ENCODE measurements at regions of chr2 and their contacts with region 1.

Region 1: GRCh38 chr2:74178201-74179062 is at the start of gene MOB1A:
- DNase-seq: peak; percentile 99
- ATAC-seq: peak; percentile 86
- H3K4me3 ChIP-seq: peak within 1 kb of the TSS; percentile 73 to 95 (median 82)
- H3K4me3 Mint-ChIP-seq: peak within 1 kb of the TSS; percentile 86
- H3K27ac ChIP-seq: peak within 1 kb of the TSS; percentile 97 to 99
- H3K27ac Mint-ChIP-seq: peak within 1 kb of the TSS; percentile 99
- H3K4me1 ChIP-seq: peaks cover 52 to 66% of the 10 kb centered on the region in 2 donors
- H3K4me1 Mint-ChIP-seq: peaks cover 49% of the 10 kb centered on the region
- H3K27me3 ChIP-seq: no peaks in the 10 kb centered on the region
- H3K27me3 Mint-ChIP-seq: no peaks in the 10 kb centered on the region
- CTCF ChIP-seq: no peak
- total RNA-seq, gene MOB1A: 219 and 227 TPM in 2 replicates

Region 2: GRCh38 chr2:73970850-73971471 is 207.5 kb before region 1 on chr2:
- CTCF ChIA-PET with region 1: interaction called, 3 read pairs
- POLR2A ChIA-PET with region 1: no interaction called
- intact Hi-C with region 1: loop called (anchors 5 kb)
- DNase-seq: peak; percentile 76
- ATAC-seq: peak; percentile 86
- H3K4me3 ChIP-seq: peak overlapping the region in 3 of 5 experiments; percentile 23 to 47 (median 31)
- H3K4me3 Mint-ChIP-seq: peak overlapping the region; percentile 73
- H3K27ac ChIP-seq: peak overlapping the region; percentile 5 to 53
- H3K27ac Mint-ChIP-seq: peak overlapping the region; percentile 65
- H3K4me1 ChIP-seq: peaks cover 35 to 38% of the 10 kb centered on the region in 2 donors
- H3K4me1 Mint-ChIP-seq: peaks cover 46% of the 10 kb centered on the region
- H3K27me3 ChIP-seq: no peaks in the 10 kb centered on the region
- H3K27me3 Mint-ChIP-seq: no peaks in the 10 kb centered on the region
- CTCF ChIP-seq: no peak

Region 3: GRCh38 chr2:74119912-74120825 is 58.3 kb before region 1 on chr2:
- CTCF ChIA-PET with region 1: no interaction called
- POLR2A ChIA-PET with region 1: interaction called, 9 read pairs
- intact Hi-C with region 1: loop called (anchors 1 kb)
- DNase-seq: peak; percentile 91
- ATAC-seq: peak; percentile 96
- H3K4me3 ChIP-seq: peak overlapping the region; percentile 55 to 93 (median 88)
- H3K4me3 Mint-ChIP-seq: peak overlapping the region; percentile 91
- H3K27ac ChIP-seq: peak overlapping the region; percentile 85 to 88
- H3K27ac Mint-ChIP-seq: peak overlapping the region; percentile 94
- H3K4me1 ChIP-seq: peaks cover 0 to 11% of the 10 kb centered on the region in 2 donors
- H3K4me1 Mint-ChIP-seq: peaks cover 8% of the 10 kb centered on the region
- H3K27me3 ChIP-seq: peaks cover 0 to 2% (median 0%) of the 10 kb centered on the region in 4 experiments
- H3K27me3 Mint-ChIP-seq: peaks cover 2% of the 10 kb centered on the region
- CTCF ChIP-seq: peak; percentile 69

Region 4: DNA sequence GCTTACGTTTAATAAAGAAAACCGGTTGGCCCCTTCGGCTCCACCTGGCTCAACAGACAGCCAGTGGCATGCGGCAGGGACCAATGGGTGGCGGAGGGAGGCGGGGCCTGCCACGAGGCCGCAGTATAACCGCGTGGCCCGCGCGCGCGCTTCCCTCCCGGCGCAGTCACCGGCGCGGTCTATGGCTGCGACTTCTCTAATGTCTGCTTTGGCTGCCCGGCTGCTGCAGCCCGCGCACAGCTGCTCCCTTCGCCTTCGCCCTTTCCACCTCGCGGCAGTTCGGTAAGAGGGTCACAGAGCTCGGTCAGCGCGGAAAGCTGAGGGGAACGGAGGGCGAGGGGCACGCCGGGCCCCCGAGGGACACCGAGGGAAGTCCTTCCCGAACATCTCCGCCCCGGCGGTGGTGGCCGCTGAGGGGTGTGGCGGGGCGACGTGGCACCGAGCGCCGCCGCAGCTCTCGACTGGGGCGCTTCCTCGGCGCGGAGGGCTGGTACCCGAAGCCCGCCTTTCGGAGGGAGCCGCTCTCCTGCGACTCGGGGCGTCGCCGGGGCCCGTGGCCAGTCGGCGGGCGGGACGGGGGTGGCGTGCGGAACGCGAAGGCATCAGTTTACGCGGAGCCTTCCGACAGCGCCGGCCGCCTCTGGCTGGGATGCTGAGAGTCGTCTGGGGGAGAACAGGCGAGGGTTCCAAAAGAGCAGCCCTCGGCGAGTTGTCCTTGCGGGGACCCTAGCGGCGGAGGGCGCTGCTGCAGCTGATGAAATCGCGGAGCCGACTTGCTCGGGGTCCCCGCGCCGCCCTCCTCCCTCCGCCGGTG is 20.2 kb after region 1 on chr2 and contains the start of gene MTHFD2:
- CTCF ChIA-PET with region 1: interaction called, 132 read pairs
- POLR2A ChIA-PET with region 1: interaction called, 120 read pairs
- intact Hi-C with region 1: loop called (anchors 1 kb)
- DNase-seq: peak; percentile 94
- ATAC-seq: peak; percentile 87
- H3K4me3 ChIP-seq: peak within 1 kb of the TSS; percentile 30 to 79 (median 74)
- H3K4me3 Mint-ChIP-seq: peak within 1 kb of the TSS; percentile 98
- H3K27ac ChIP-seq: peak within 1 kb of the TSS; percentile 92 to 96
- H3K27ac Mint-ChIP-seq: peak within 1 kb of the TSS; percentile 99
- H3K4me1 ChIP-seq: peaks cover 14 to 23% of the 10 kb centered on the region in 2 donors
- H3K4me1 Mint-ChIP-seq: peaks cover 24% of the 10 kb centered on the region
- H3K27me3 ChIP-seq: no peaks in the 10 kb centered on the region
- H3K27me3 Mint-ChIP-seq: no peaks in the 10 kb centered on the region
- CTCF ChIP-seq: peak; percentile 93
- total RNA-seq, gene MTHFD2: 17.4 and 18.0 TPM in 2 replicates

Region 5: GRCh38 chr2:74212702-74213410 is 34.4 kb after region 1 on chr2:
- CTCF ChIA-PET with region 1: interaction called, 3 read pairs
- POLR2A ChIA-PET with region 1: interaction called, 9 read pairs
- intact Hi-C with region 1: loop called (anchors 5 kb)
- DNase-seq: no peak
- ATAC-seq: peak; percentile 54
- H3K4me3 ChIP-seq: no peak overlapping the region
- H3K4me3 Mint-ChIP-seq: no peak overlapping the region
- H3K27ac ChIP-seq: peak overlapping the region in 1 of 2 donors; percentile 46
- H3K27ac Mint-ChIP-seq: no peak overlapping the region
- H3K4me1 ChIP-seq: peaks cover 8 to 11% of the 10 kb centered on the region in 2 donors
- H3K4me1 Mint-ChIP-seq: peaks cover 14% of the 10 kb centered on the region
- H3K27me3 ChIP-seq: no peaks in the 10 kb centered on the region
- H3K27me3 Mint-ChIP-seq: no peaks in the 10 kb centered on the region
- CTCF ChIP-seq: no peak

Region 6: GRCh38 chr2:74267068-74267467 is 88.6 kb after region 1 on chr2:
- CTCF ChIA-PET with region 1: no interaction called
- POLR2A ChIA-PET with region 1: no interaction called
- intact Hi-C with region 1: no loop called
- DNase-seq: peak; percentile 29
- ATAC-seq: no peak
- H3K4me3 ChIP-seq: no peak overlapping the region
- H3K4me3 Mint-ChIP-seq: no peak overlapping the region
- H3K27ac ChIP-seq: no peak overlapping the region
- H3K27ac Mint-ChIP-seq: no peak overlapping the region
- H3K4me1 ChIP-seq: no peaks in the 10 kb centered on the region
- H3K4me1 Mint-ChIP-seq: peaks cover 2% of the 10 kb centered on the region
- H3K27me3 ChIP-seq: no peaks in the 10 kb centered on the region
- H3K27me3 Mint-ChIP-seq: no peaks in the 10 kb centered on the region
- CTCF ChIP-seq: no peak

Region 7: GRCh38 chr2:74391580-74392448 is 213.4 kb after region 1 on chr2:
- CTCF ChIA-PET with region 1: interaction called, 3 read pairs
- POLR2A ChIA-PET with region 1: no interaction called
- intact Hi-C with region 1: loop called (anchors 1 kb)
- DNase-seq: peak; percentile 98
- ATAC-seq: peak; percentile 89
- H3K4me3 ChIP-seq: peak overlapping the region; percentile 71 to 88 (median 80)
- H3K4me3 Mint-ChIP-seq: peak overlapping the region; percentile 99
- H3K27ac ChIP-seq: peak overlapping the region; percentile 94 to 95
- H3K27ac Mint-ChIP-seq: peak overlapping the region; percentile 100
- H3K4me1 ChIP-seq: peaks cover 18 to 24% of the 10 kb centered on the region in 2 donors
- H3K4me1 Mint-ChIP-seq: peaks cover 16% of the 10 kb centered on the region
- H3K27me3 ChIP-seq: peaks cover 0 to 7% (median 0%) of the 10 kb centered on the region in 4 experiments
- H3K27me3 Mint-ChIP-seq: peaks cover 5% of the 10 kb centered on the region
- CTCF ChIP-seq: peak; percentile 98